ENCODE measurements at regions of chr1 and their contacts with region 1.

Region 1: GRCh38 chr1:225999227-225999911 is at the start of gene SDE2:
- DNase-seq: peak; percentile 99
- ATAC-seq: peak; percentile 82
- H3K4me3 Mint-ChIP-seq: peak within 1 kb of the TSS; percentile 100
- H3K27ac Mint-ChIP-seq: peak within 1 kb of the TSS; percentile 100
- H3K4me1 Mint-ChIP-seq: peaks cover 81% of the 10 kb centered on the region
- H3K27me3 Mint-ChIP-seq: no peaks in the 10 kb centered on the region
- CTCF ChIP-seq: no peak
- total RNA-seq, gene SDE2: 21.1 and 21.8 TPM in 2 replicates

Region 2: GRCh38 chr1:225428068-225428880 is 571.1 kb before region 1 on chr1:
- CTCF ChIA-PET with region 1: no interaction called
- POLR2A ChIA-PET with region 1: interaction called, 13 read pairs
- intact Hi-C with region 1: loop called (anchors 1 kb)
- DNase-seq: peak; percentile 88
- ATAC-seq: peak; percentile 92
- H3K4me3 Mint-ChIP-seq: peak overlapping the region; percentile 89
- H3K27ac Mint-ChIP-seq: peak overlapping the region; percentile 90
- H3K4me1 Mint-ChIP-seq: peaks cover 48% of the 10 kb centered on the region
- H3K27me3 Mint-ChIP-seq: no peaks in the 10 kb centered on the region
- CTCF ChIP-seq: no peak

Region 3: GRCh38 chr1:225777583-225778336 is 221.6 kb before region 1 on chr1 and contains the start of gene SRP9:
- CTCF ChIA-PET with region 1: no interaction called
- POLR2A ChIA-PET with region 1: interaction called, 16 read pairs
- intact Hi-C with region 1: no loop called
- DNase-seq: peak; percentile 94
- ATAC-seq: peak; percentile 97
- H3K4me3 Mint-ChIP-seq: no peak within 1 kb of the TSS
- H3K27ac Mint-ChIP-seq: no peak within 1 kb of the TSS
- H3K4me1 Mint-ChIP-seq: peaks cover 37% of the 10 kb centered on the region
- H3K27me3 Mint-ChIP-seq: no peaks in the 10 kb centered on the region
- CTCF ChIP-seq: no peak
- total RNA-seq, gene SRP9: 141 and 143 TPM in 2 replicates

Region 4: DNA sequence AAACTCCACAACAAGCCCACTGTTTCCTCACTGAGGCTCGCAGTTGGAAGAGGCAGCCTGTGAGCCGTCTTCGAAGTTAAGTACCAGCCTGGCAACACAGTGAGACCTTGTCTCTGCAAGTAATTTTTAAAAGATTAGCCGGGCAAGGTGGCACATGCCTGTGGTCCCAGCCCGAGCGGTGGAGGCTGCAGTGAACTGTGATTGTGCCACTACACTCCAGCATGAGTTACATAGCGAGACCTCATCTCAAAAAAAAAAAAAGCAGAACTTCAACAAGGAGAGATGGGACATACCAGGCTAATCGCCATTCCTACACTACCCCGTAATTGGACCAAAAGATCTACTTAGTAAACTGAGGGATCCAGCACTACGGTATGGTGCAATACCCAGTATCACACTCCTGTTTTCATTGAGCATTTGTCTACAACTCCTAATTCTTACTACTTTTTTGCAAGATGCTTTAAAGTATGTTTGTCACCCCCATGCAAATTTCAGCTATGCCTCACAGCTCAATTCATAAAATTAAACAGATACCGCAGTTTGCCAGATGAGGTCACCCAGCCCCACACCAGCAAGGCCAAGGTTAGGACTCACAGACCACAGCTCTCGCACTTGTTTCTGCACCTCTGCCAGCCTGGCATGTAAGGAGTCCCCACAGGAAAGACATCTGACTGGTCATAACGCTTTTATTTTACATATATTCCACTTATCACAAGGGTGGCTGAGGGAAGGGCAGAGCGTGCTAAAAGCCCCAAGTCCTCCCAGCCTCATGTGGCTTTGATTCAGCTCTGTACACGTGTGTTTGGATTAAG is 21.2 kb before region 1 on chr1:
- CTCF ChIA-PET with region 1: interaction called, 3 read pairs
- POLR2A ChIA-PET with region 1: interaction called, 8 read pairs
- intact Hi-C with region 1: loop called (anchors 1 kb)
- DNase-seq: no peak
- ATAC-seq: peak; percentile 79
- H3K4me3 Mint-ChIP-seq: peak overlapping the region; percentile 63
- H3K27ac Mint-ChIP-seq: peak overlapping the region; percentile 81
- H3K4me1 Mint-ChIP-seq: peaks cover 33% of the 10 kb centered on the region
- H3K27me3 Mint-ChIP-seq: no peaks in the 10 kb centered on the region
- CTCF ChIP-seq: no peak

Region 5: GRCh38 chr1:226083302-226084101 is 84.1 kb after region 1 on chr1:
- CTCF ChIA-PET with region 1: no interaction called
- POLR2A ChIA-PET with region 1: interaction called, 18 read pairs
- intact Hi-C with region 1: loop called (anchors 1 kb)
- DNase-seq: peak; percentile 99
- ATAC-seq: peak; percentile 91
- H3K4me3 Mint-ChIP-seq: peak overlapping the region; percentile 88
- H3K27ac Mint-ChIP-seq: peak overlapping the region; percentile 68
- H3K4me1 Mint-ChIP-seq: peaks cover 25% of the 10 kb centered on the region
- H3K27me3 Mint-ChIP-seq: no peaks in the 10 kb centered on the region
- CTCF ChIP-seq: no peak

Region 6: GRCh38 chr1:226135059-226135651 is 135.8 kb after region 1 on chr1:
- CTCF ChIA-PET with region 1: no interaction called
- POLR2A ChIA-PET with region 1: interaction called, 16 read pairs
- intact Hi-C with region 1: no loop called
- DNase-seq: no peak
- ATAC-seq: no peak
- H3K4me3 Mint-ChIP-seq: no peak overlapping the region
- H3K27ac Mint-ChIP-seq: peak overlapping the region; percentile 96
- H3K4me1 Mint-ChIP-seq: peaks cover 54% of the 10 kb centered on the region
- H3K27me3 Mint-ChIP-seq: no peaks in the 10 kb centered on the region
- CTCF ChIP-seq: no peak

Region 7: GRCh38 chr1:227006226-227006796 is 1006.9 kb after region 1 on chr1:
- CTCF ChIA-PET with region 1: no interaction called
- POLR2A ChIA-PET with region 1: no interaction called
- intact Hi-C with region 1: no loop called
- DNase-seq: no peak
- ATAC-seq: no peak
- H3K4me3 Mint-ChIP-seq: no peak overlapping the region
- H3K27ac Mint-ChIP-seq: no peak overlapping the region
- H3K4me1 Mint-ChIP-seq: no peaks in the 10 kb centered on the region
- H3K27me3 Mint-ChIP-seq: peaks cover 3% of the 10 kb centered on the region
- CTCF ChIP-seq: no peak